ENCODE measurements at regions of chr4 and their contacts with region 1.

Region 1: DNA sequence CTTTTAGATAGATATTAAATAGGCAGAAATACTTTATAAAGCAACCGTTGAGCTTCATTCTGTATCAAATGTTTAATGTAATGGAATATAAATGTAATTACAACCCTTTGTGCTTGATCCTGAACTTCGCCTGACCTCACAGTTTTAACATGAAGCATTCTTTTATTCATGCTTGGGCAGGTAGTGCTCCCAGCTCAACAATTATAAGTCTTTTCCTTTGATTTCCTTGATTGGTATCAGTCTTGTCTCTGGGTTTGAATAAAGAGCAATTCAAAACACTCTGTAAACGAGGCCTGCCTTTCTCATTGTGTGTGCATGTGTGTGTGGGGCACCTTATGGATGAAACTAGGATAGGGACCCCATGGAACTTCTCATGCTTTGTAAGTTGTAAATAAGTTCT is 6.8 kb downstream of the METAP1 start:
- DNase-seq: no peak
- ATAC-seq: no peak
- H3K4me3 ChIP-seq: no peak overlapping the region
- H3K27ac ChIP-seq: no peak overlapping the region
- H3K4me1 ChIP-seq: peaks cover 18% of the 10 kb centered on the region
- H3K27me3 ChIP-seq: no peaks in the 10 kb centered on the region
- CTCF ChIP-seq: no peak

Region 2: GRCh38 chr4:98786866-98787265 is 215.4 kb before region 1 on chr4:
- CTCF ChIA-PET with region 1: no interaction called
- POLR2A ChIA-PET with region 1: no interaction called
- in situ Hi-C with region 1: no loop called
- intact Hi-C with region 1: no loop called
- DNase-seq: no peak
- ATAC-seq: no peak
- H3K4me3 ChIP-seq: no peak overlapping the region
- H3K27ac ChIP-seq: peak overlapping the region; percentile 41; the same call in 1 of the 2 replicates
- H3K4me1 ChIP-seq: no peaks in the 10 kb centered on the region
- H3K27me3 ChIP-seq: no peaks in the 10 kb centered on the region
- CTCF ChIP-seq: peak; percentile 49

Region 3: DNA sequence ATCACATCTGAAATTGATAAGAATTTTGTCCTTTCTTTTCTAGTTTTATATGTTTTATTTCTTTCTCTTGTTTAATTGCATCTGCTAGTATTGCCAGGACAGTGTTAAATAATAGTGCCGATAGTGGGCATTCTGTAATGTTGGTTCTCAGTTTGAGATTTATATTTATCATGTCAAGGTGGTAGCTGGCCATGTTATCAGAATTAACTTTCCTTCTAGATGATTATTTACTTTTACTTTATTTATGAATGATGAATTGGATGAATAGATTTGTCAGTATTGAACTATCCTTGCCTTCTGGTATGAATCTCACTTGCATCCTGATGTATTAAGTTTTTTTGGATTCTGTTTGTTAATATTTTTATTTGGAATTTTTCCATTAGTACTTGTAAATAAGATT is 35.9 kb after region 1 on chr4:
- CTCF ChIA-PET with region 1: no interaction called
- POLR2A ChIA-PET with region 1: no interaction called
- in situ Hi-C with region 1: no loop called
- intact Hi-C with region 1: loop called (anchors 5 kb)
- DNase-seq: no peak
- ATAC-seq: no peak
- H3K4me3 ChIP-seq: no peak overlapping the region
- H3K27ac ChIP-seq: no peak overlapping the region
- H3K4me1 ChIP-seq: no peaks in the 10 kb centered on the region
- H3K27me3 ChIP-seq: no peaks in the 10 kb centered on the region
- CTCF ChIP-seq: no peak